Left ventricle myocardium inferior (tissue), 1 donor: ENCODE measurements at regions of chr9 and their contacts with region 1.

Region 1: GRCh38 chr9:127734747-127735529 is at the start of gene TOR2A:
- DNase-seq: peak; percentile 98
- H3K4me3 ChIP-seq: peak within 1 kb of the TSS; percentile 94
- H3K27ac ChIP-seq: peak within 1 kb of the TSS; percentile 98
- H3K4me1 ChIP-seq: peaks cover 32% of the 10 kb centered on the region
- H3K27me3 ChIP-seq: no peaks in the 10 kb centered on the region
- CTCF ChIP-seq: peak; percentile 89
- total RNA-seq, gene TOR2A: 2.3 TPM

Region 2: GRCh38 chr9:127785023-127785932 is 50.3 kb after region 1 on chr9:
- intact Hi-C with region 1: loop called (anchors 5 kb)
- DNase-seq: peak; percentile 89
- H3K4me3 ChIP-seq: peak overlapping the region; percentile 90
- H3K27ac ChIP-seq: peak overlapping the region; percentile 98
- H3K4me1 ChIP-seq: peaks cover 68% of the 10 kb centered on the region
- H3K27me3 ChIP-seq: no peaks in the 10 kb centered on the region
- CTCF ChIP-seq: peak; percentile 87